Activated CD4-positive, alpha-beta T cell treated with anti-CD3 and anti-CD28 coated beads for 36 hours (primary cell): ENCODE measurements at regions of chr15 and their contacts with region 1.

Region 1: GRCh38 chr15:57133127-57133968 is 214.9 kb downstream of the TCF12 start:
- DNase-seq: peak; percentile 28
- ATAC-seq: peak; percentile 89
- H3K4me3 Mint-ChIP-seq: no peak overlapping the region
- H3K27ac Mint-ChIP-seq: no peak overlapping the region
- H3K4me1 Mint-ChIP-seq: peaks cover 44% of the 10 kb centered on the region
- H3K27me3 Mint-ChIP-seq: no peaks in the 10 kb centered on the region

Region 2: DNA sequence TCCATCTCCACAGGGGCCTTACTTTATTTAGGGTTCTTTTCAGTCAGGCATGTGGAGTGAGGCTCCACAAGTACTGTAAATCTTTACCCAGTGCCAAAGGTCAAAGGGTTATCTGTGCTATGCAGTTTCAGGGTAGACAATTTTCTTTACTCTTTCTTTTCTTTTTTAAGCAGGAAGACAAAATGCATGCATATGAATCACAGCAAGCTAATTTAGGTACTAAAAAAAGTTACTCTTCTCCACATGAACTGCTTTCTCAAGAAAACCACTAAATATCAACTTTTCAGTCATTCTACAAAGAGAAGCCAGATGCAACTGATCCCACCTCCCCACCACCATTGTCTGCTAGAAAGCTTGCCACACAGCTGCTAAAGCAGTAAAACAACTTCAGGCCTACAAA is 1471.9 kb before region 1 on chr15:
- CTCF ChIA-PET with region 1: no interaction called
- POLR2A ChIA-PET with region 1: no interaction called
- intact Hi-C with region 1: no loop called
- DNase-seq: peak; percentile 24
- ATAC-seq: peak; percentile 89
- H3K4me3 Mint-ChIP-seq: no peak overlapping the region
- H3K27ac Mint-ChIP-seq: no peak overlapping the region
- H3K4me1 Mint-ChIP-seq: peaks cover 17% of the 10 kb centered on the region
- H3K27me3 Mint-ChIP-seq: no peaks in the 10 kb centered on the region

Region 3: GRCh38 chr15:56616529-56616928 is 516.8 kb before region 1 on chr15:
- CTCF ChIA-PET with region 1: no interaction called
- POLR2A ChIA-PET with region 1: no interaction called
- intact Hi-C with region 1: no loop called
- DNase-seq: no peak
- ATAC-seq: no peak
- H3K4me3 Mint-ChIP-seq: no peak overlapping the region
- H3K27ac Mint-ChIP-seq: no peak overlapping the region
- H3K4me1 Mint-ChIP-seq: peaks cover 10% of the 10 kb centered on the region
- H3K27me3 Mint-ChIP-seq: peaks cover 8% of the 10 kb centered on the region

Region 4: DNA sequence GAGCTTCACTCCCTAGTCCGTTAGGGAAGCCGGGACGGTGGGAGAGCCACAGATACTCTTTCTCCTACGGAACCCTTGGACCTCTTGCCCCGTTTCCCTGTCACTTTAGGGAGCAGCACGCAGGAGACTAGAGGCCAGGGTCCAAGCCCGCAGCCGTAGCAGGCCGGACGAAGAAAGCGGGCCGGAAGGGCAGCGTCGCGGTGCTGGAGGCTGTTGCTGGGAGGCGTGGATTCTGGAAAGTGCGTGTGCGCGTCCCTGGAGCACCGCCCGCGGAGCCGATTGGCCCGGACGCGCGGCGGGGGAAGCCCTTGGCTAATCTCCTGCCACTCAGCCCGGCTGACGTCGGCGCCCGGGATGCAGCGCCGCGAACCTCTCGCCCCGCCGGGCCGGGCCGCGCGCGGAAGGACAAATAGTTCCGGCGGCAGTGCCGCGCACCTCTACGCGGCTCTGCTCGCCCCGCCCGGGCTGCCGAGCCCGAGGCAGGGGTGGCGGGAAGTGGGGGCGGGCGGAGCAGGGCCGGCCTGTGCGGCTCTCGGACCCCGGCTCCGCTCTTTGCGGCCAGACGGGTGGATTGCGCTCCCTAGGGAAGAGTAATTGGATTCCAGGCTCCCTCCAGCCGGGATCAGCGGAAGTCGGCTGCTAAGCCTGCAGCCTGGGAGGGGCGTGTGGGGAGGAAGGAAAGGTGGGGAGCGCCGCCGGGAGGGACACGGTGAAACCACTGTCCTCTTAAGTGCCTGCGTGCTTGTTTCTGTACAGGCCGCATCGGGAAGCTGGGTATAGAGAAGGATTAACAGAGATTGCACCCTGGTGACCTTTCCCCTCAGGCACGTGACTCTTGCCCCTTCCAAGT is 246.2 kb before region 1 on chr15:
- CTCF ChIA-PET with region 1: no interaction called
- POLR2A ChIA-PET with region 1: no interaction called
- intact Hi-C with region 1: loop called in 1 of 2 experiments (anchors 5 kb)
- DNase-seq: peak; percentile 89
- ATAC-seq: peak; percentile 96
- H3K4me3 Mint-ChIP-seq: peak overlapping the region; percentile 71
- H3K27ac Mint-ChIP-seq: peak overlapping the region; percentile 86
- H3K4me1 Mint-ChIP-seq: peaks cover 20% of the 10 kb centered on the region
- H3K27me3 Mint-ChIP-seq: no peaks in the 10 kb centered on the region

Region 5: GRCh38 chr15:57060799-57061198 is 72.5 kb before region 1 on chr15:
- CTCF ChIA-PET with region 1: no interaction called
- POLR2A ChIA-PET with region 1: no interaction called
- intact Hi-C with region 1: no loop called
- DNase-seq: peak; percentile 9
- ATAC-seq: no peak
- H3K4me3 Mint-ChIP-seq: no peak overlapping the region
- H3K27ac Mint-ChIP-seq: no peak overlapping the region
- H3K4me1 Mint-ChIP-seq: peaks cover 38% of the 10 kb centered on the region
- H3K27me3 Mint-ChIP-seq: no peaks in the 10 kb centered on the region